Body of pancreas (tissue), 4 donors: ENCODE measurements at regions of chr10 and their contacts with region 1.

Region 1: DNA sequence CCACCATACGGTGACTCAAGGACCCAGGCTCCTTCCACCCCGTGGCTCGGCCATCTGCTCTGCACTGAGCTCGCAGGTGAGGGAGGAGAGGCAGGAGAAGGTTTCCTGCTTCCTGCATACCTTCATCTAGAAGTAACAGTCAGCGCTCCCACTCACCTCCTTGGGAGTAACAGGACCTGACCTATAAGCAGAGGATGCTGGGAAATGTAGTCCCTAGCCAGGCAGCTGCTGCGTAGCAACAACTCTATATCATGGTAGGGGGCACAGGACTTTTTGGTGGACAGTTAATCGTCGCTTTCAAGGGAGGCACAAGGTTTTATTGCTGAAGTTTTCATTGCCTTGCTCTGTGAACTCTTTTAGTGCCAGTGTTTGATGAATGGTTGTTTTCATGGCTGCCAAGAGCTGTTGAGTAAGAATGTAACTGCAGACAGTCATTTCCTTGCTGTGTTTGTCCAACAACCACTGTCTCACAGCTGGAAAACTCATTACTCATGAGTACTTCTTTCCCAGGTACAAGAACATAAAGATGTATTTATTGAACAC is 10.2 kb upstream of the ZFYVE27 start:
- DNase-seq: peak in 3 of 4 donors; percentile 19 to 33 (median 23)
- ATAC-seq: peak; percentile 68
- H3K4me3 ChIP-seq: no peak overlapping the region
- H3K27ac ChIP-seq: peak overlapping the region; percentile 16 to 54 (median 36)
- H3K4me1 ChIP-seq: peaks cover 6% of the 10 kb centered on the region
- H3K27me3 ChIP-seq: no peaks in the 10 kb centered on the region
- CTCF ChIP-seq: no peak
- POLR2A ChIP-seq: no peak

Region 2: DNA sequence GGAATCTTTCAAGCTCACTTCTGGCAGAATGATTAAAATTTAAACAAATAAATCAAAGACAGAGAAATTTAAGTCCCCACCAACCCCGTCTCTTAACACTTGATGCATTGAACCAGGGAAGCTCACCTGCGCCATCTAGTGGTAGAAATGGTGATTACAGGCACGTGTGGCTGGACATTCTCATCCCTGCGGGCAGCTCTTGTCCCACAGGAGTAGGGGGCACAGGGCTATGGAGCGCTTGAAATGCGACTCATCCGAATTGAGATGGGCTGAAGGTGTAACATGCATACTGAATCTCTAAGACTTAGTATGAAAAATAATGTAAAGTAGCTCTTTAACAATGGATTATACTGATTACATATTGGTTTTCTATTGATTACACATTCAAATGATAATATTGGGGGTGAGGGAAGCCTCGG is 516.2 kb before region 1 on chr10:
- intact Hi-C with region 1: no loop called
- DNase-seq: peak; percentile 66 to 81 (median 74)
- ATAC-seq: peak; percentile 72
- H3K4me3 ChIP-seq: no peak overlapping the region
- H3K27ac ChIP-seq: no peak overlapping the region
- H3K4me1 ChIP-seq: no peaks in the 10 kb centered on the region
- H3K27me3 ChIP-seq: no peaks in the 10 kb centered on the region
- CTCF ChIP-seq: peak; percentile 72 to 99 (median 86)
- POLR2A ChIP-seq: no peak

Region 3: GRCh38 chr10:97518301-97519043 is 208.2 kb before region 1 on chr10:
- intact Hi-C with region 1: no loop called
- DNase-seq: no peak
- ATAC-seq: no peak
- H3K4me3 ChIP-seq: no peak overlapping the region
- H3K27ac ChIP-seq: no peak overlapping the region
- H3K4me1 ChIP-seq: peaks cover 6% of the 10 kb centered on the region
- H3K27me3 ChIP-seq: no peaks in the 10 kb centered on the region
- CTCF ChIP-seq: no peak
- POLR2A ChIP-seq: no peak

Region 4: DNA sequence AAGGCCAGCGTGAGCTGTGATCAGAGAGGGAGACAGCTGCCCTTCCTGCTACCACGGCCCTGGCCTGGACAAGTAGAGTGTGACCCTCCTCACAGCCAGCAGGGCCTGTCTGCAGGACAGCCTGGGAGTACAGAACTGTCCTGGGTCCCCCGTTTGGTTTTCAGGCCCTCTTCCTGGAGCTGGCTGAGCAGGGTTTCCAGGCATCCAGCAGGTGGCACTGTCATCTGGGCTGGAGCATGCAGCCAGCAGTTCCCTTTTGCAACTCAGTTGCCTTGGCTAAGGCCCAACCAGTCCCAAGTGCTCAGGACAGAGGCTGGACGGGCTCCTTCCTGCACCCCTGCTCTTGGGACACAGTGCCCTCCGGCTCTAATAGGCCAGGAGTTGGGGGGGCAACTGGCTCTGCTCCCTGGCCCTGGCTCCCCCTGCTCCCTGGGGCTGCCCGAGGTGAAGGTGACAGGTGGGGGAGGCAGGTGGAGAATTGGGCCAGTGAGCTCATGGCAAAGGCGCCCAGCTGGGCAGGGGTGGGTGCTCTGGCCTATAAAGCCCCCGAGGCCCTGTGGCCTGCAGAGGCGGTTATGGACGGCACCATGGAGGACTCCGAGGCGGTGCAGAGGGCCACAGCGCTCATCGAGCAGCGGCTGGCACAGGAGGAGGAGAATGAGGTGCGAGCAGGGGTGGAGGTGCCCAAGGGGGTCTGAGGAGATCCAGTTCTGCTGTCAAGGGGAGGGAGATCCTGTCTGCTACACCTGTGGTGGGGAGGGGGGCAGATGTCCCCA is 154.3 kb before region 1 on chr10 and contains the start of gene ANKRD2:
- intact Hi-C with region 1: loop called (anchors 10 kb)
- DNase-seq: peak; percentile 81 to 91 (median 86)
- ATAC-seq: peak; percentile 69
- H3K4me3 ChIP-seq: no peak within 1 kb of the TSS
- H3K27ac ChIP-seq: peak within 1 kb of the TSS; percentile 32 to 84 (median 78)
- H3K4me1 ChIP-seq: peaks cover 46% of the 10 kb centered on the region
- H3K27me3 ChIP-seq: no peaks in the 10 kb centered on the region
- CTCF ChIP-seq: peak; percentile 76 to 91 (median 84)
- POLR2A ChIP-seq: no peak
- total RNA-seq, gene ANKRD2: not detected

Region 5: DNA sequence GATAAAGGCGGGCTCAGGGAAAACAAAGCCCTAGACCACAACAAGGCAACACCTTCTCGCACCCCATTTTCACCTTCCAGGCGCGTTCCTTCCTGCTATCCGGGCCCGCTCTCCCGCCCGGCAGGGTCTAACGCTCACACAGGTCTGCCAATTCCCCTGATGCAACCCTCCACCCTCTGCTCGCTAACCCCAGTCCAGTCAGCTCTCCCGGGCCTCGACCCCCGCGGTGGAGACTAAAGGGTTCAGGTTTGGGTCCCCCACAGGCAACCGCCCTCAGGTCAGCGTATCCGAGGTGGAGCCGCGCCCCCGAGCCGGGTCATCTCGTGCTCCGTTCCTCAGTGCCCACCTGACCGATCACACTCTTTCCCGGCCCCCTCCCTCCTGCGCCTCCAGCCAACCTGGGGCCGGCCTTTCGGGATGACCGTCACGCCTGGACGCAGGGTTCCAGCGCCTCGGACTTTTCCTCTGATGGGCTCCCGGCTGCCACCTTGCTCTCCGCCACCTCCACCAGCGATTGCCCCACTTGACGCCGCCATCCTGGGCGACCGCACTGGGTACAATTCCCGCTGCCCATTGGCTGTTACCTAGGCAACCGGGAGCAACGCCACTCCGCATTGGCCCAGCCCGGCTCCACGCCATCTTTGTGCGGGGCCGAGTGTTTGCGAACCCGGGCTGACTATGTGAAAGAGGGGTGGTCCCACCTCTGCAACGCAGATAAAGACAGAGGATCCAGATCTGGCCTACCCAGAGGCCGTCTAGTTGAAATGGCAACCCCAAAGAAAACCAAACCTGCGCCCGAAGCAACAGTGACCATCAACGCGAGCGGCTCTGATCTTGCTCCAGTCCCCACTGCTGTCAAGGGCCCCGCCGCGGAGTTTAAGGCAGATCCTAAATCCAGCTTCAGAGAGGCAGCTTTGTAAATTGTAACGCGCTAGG is 93.5 kb before region 1 on chr10 and contains the start of gene MORN4:
- intact Hi-C with region 1: no loop called
- DNase-seq: peak; percentile 94 to 96 (median 95)
- ATAC-seq: peak; percentile 100
- H3K4me3 ChIP-seq: peak within 1 kb of the TSS; percentile 38 to 91
- H3K27ac ChIP-seq: peak within 1 kb of the TSS; percentile 52 to 71 (median 54)
- H3K4me1 ChIP-seq: peaks cover 11% of the 10 kb centered on the region
- H3K27me3 ChIP-seq: no peaks in the 10 kb centered on the region
- CTCF ChIP-seq: no peak
- POLR2A ChIP-seq: peak in 2 of 3 donors; percentile 53 to 59
- total RNA-seq, gene MORN4: 4.9 to 8.3 TPM

Region 6: DNA sequence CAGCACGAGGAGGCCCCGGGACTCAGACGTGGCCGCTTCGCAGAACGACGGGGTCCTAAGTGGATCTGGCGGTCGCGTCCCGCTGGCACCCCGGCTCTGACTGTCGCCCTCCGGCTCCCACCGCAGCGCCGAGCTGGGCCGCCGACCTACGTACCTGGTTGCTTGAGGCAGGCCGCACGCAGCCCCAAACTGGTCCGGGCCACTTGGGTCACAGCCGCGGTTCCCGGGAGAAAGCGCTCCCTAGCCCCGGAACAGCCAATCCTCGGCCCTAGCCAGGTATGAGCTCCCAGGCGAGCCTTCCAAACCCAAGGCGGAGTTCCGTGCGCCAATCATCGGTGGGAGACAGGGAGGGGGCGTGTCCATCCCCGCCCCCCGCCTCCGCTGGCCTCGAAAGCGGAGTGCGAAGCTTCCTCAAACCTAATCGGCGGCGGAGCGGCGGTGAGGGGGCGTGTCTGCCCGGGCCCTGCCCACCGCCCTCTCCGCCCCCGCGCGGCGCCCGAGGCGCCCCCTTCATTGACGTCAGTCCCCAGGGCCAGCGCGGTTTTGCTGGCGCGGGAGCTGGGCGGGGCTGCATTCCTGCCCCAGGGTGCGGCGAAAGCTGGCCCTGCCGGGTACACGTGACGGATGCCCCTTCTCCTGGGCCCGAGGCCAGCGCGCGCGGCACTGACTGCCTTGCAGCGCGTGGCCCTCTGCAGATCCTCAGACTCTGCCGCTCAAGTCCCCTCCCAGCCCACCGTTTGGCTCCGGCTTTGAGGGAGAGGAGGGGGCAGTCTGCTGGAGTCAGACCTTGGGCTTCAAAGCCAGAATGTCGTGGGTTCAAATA is 39.5 kb before region 1 on chr10 and contains the start of gene AVPI1:
- intact Hi-C with region 1: no loop called
- DNase-seq: peak; percentile 97 to 99 (median 98)
- ATAC-seq: peak; percentile 92
- H3K4me3 ChIP-seq: peak within 1 kb of the TSS; percentile 31 to 43
- H3K27ac ChIP-seq: peak within 1 kb of the TSS; percentile 90 to 95 (median 93)
- H3K4me1 ChIP-seq: peaks cover 50% of the 10 kb centered on the region
- H3K27me3 ChIP-seq: no peaks in the 10 kb centered on the region
- CTCF ChIP-seq: peak in 1 of 7 experiments; percentile 14
- POLR2A ChIP-seq: peak; percentile 98 to 99 (median 98)
- total RNA-seq, gene AVPI1: 5.7 to 14.8 TPM